Activated CD4-positive, alpha-beta T cell treated with anti-CD3 and anti-CD28 coated beads for 36 hours (primary cell): ENCODE measurements at regions of chr20 and their contacts with region 1.

Region 1: GRCh38 chr20:38748097-38748860 is at the start of gene ACTR5:
- DNase-seq: peak; percentile 98
- ATAC-seq: peak; percentile 92
- H3K4me3 Mint-ChIP-seq: peak within 1 kb of the TSS; percentile 91
- H3K27ac Mint-ChIP-seq: peak within 1 kb of the TSS; percentile 98
- H3K4me1 Mint-ChIP-seq: peaks cover 22% of the 10 kb centered on the region
- H3K27me3 Mint-ChIP-seq: no peaks in the 10 kb centered on the region
- total RNA-seq, gene ACTR5: 6.3 to 8.4 TPM

Region 2: DNA sequence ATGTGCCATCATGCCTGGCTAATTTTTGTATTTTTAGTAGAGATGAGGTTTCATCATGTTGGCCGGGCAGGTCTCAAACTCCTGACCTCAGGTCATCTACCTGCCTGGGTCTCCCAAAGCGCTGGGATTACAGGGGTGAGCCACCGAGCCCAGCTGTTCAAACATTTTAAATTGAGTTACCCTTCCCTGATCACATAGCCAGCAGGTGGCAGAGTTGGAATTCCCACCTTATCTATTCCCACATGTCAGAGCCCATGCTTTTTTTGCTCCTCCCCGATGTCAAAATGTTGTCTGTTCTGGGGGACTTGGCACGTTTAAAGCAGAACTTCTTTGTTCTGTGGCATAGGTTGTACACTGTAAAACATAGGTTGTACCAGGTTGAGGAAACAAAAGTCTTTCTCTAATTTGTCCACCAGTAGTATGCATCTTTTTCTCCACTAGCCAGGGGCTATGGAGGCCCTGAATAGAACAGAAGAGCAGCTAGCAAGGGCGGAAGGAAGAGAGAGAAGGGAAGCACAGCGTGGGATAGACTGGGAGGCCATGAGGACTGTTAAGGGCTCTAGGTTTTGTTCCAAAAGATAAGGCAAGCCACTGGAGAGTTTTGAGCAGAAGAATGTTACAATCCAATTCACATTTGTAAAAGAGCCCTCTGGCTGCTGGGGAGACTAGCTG is 409.3 kb before region 1 on chr20:
- CTCF ChIA-PET with region 1: no interaction called
- POLR2A ChIA-PET with region 1: no interaction called
- intact Hi-C with region 1: no loop called
- DNase-seq: no peak
- ATAC-seq: no peak
- H3K4me3 Mint-ChIP-seq: no peak overlapping the region
- H3K27ac Mint-ChIP-seq: no peak overlapping the region
- H3K4me1 Mint-ChIP-seq: no peaks in the 10 kb centered on the region
- H3K27me3 Mint-ChIP-seq: peaks cover 17% of the 10 kb centered on the region

Region 3: DNA sequence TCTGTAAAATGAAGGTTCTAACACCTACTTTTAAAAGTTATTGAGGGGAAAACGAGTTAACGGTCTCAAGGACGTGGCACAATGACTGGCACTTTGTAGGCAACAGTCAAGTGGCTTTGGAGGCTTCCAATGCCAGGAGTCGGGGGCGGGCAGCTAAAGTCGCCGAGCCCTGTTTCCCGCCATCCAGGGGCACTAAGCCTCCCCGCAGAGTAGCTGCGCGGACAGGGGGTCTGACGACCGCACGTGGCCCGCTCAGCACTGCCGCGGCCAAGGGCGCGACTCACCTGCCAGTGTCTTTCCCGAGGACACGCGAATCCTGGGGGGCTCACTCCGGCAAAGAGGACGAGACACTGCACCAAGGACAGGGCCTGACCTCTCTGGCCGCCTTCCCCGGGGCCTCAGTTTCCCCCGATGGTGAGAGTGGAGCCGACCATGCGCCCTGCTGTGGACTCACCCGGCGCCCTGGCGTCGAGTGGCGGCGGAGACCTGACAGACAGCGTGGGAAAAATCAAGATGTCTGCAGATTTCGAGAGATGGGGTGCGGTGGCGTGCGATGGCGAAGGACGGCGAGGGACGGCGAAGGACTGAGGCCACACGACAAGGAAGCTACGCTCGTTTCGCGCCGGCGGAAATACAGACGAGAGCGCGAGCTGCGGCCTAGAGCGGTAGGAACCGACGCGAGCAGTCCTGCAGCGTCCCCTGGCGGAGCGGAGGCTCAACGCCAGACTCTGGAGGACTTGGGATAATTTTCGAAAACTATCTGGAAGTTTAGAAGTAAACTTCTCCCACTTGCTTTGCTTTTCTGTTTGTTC is 313.3 kb before region 1 on chr20 and contains the start of gene SNHG17:
- CTCF ChIA-PET with region 1: no interaction called
- POLR2A ChIA-PET with region 1: no interaction called
- intact Hi-C with region 1: loop called in 1 of 2 experiments (anchors 1 kb)
- DNase-seq: peak; percentile 94
- ATAC-seq: peak; percentile 84
- H3K4me3 Mint-ChIP-seq: peak within 1 kb of the TSS; percentile 97
- H3K27ac Mint-ChIP-seq: peak within 1 kb of the TSS; percentile 98
- H3K4me1 Mint-ChIP-seq: peaks cover 39% of the 10 kb centered on the region
- H3K27me3 Mint-ChIP-seq: peaks cover 4% of the 10 kb centered on the region
- total RNA-seq, gene SNHG17: 70.7 to 72.4 TPM

Region 4: DNA sequence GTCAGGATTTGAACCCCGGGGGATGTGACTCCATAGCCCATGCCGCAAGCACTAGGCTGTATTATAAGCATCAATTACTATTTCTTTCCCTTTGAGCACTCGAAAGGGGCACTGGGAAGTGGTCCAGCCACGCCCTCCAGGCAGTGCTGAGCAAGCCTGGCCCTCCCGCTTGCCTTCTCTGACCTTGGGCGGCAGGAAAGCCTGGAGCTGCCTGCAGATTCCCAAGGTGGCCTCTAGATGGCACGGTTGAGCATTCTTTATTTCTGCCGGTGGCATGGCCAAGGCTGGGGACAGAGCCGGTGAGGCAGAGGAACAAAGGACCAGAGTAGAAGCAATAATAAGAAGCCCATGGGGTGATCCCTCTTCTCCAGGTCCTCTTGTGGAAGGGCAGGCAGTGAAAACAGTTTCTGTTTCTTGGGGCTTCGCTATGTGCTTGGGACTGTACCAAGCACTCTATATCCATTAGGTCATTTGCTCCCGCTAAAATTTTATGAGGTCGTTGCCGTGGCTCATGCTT is 114.6 kb before region 1 on chr20:
- CTCF ChIA-PET with region 1: interaction called, 12 read pairs
- POLR2A ChIA-PET with region 1: interaction called, 3 read pairs
- intact Hi-C with region 1: no loop called
- DNase-seq: peak; percentile 79
- ATAC-seq: peak; percentile 95
- H3K4me3 Mint-ChIP-seq: no peak overlapping the region
- H3K27ac Mint-ChIP-seq: no peak overlapping the region
- H3K4me1 Mint-ChIP-seq: no peaks in the 10 kb centered on the region
- H3K27me3 Mint-ChIP-seq: peaks cover 10% of the 10 kb centered on the region

Region 5: GRCh38 chr20:38730989-38731737 is 17.1 kb before region 1 on chr20:
- CTCF ChIA-PET with region 1: interaction called, 33 read pairs
- POLR2A ChIA-PET with region 1: no interaction called
- intact Hi-C with region 1: loop called (anchors 1 kb)
- DNase-seq: peak; percentile 90
- ATAC-seq: peak; percentile 81
- H3K4me3 Mint-ChIP-seq: peak overlapping the region; percentile 50
- H3K27ac Mint-ChIP-seq: no peak overlapping the region
- H3K4me1 Mint-ChIP-seq: peaks cover 39% of the 10 kb centered on the region
- H3K27me3 Mint-ChIP-seq: peaks cover 88% of the 10 kb centered on the region

Region 6: GRCh38 chr20:38805502-38805957 is 57.3 kb after region 1 on chr20 and contains the start of gene PPP1R16B:
- CTCF ChIA-PET with region 1: interaction called, 5 read pairs
- POLR2A ChIA-PET with region 1: no interaction called
- intact Hi-C with region 1: loop called (anchors 1 to 2 kb)
- DNase-seq: peak; percentile 86
- ATAC-seq: peak; percentile 79
- H3K4me3 Mint-ChIP-seq: peak within 1 kb of the TSS; percentile 86
- H3K27ac Mint-ChIP-seq: peak within 1 kb of the TSS; percentile 93
- H3K4me1 Mint-ChIP-seq: peaks cover 46% of the 10 kb centered on the region
- H3K27me3 Mint-ChIP-seq: no peaks in the 10 kb centered on the region
- total RNA-seq, gene PPP1R16B: 78.8 to 84.0 TPM

Region 7: DNA sequence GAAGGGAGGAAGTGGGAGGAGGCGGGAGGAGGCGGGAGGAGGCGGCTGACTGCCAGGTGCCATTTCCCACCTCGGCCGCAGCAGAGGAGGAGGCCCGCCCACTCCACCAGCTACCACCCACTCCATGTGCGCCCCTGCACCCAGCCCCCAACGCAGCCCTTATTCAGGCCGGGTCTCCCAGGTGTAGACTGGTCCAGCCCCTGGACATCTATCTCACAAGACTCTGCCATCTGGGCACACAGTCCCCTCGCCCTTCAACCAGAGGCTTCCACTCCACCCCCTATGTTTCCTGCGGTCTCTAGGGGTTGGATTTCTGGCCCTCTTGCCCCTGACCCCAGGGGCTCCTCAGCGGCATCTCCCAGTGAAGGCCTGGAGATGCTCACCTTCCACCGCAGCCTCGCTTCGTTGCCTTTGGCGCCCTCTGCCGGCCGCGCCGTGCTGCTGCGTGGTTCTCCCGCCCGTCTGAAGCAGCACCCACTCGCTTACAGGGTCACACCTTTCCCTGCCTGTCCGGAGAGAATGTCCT is 145.3 kb after region 1 on chr20:
- CTCF ChIA-PET with region 1: interaction called, 8 read pairs
- POLR2A ChIA-PET with region 1: no interaction called
- intact Hi-C with region 1: loop called in 1 of 2 experiments (anchors 5 kb)
- DNase-seq: peak; percentile 89
- ATAC-seq: peak; percentile 71
- H3K4me3 Mint-ChIP-seq: peak overlapping the region; percentile 37
- H3K27ac Mint-ChIP-seq: peak overlapping the region; percentile 88
- H3K4me1 Mint-ChIP-seq: peaks cover 54% of the 10 kb centered on the region
- H3K27me3 Mint-ChIP-seq: no peaks in the 10 kb centered on the region

Region 8: DNA sequence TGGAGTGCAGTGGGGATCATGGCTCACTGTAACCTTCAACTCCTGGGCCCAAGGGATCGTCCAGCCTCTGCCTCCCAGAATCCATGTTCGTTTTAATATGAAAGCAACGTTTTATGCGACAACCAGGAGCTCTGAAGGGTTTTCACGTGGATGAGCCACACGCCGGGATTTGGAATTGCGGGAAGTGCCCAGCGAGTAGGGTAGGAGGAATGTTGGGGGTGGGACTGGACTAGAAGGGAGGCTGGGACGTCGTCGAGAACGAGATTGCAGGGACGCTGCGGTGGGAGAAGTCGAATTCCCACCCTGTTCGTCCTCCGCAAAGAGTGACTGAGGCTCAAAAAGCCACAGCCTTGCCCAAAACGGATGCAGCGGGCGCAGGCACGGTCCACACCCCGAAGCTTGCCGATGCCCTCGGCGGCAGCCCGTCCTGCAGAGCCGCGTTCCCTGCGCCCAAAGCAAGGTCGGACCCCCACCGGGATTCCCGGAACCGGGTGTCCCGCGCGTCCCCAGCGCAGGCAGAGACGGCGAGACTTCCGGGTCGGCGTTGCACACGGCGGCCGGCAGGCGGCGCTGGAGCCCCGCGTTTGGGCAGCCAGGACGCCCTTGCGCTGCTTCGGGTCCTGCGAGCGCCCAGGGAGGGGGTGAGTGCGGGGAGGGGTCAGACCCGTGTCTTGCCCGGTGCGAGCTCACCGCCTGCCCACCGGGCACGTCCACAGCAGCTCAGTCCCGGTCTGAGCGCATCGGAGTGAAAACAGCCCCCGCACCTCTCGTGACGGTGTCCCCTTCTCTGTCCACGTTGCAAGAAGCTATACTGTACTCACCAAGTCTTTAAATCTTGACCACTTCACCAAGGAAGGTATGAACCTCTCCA is 301.6 kb after region 1 on chr20:
- CTCF ChIA-PET with region 1: interaction called, 4 read pairs
- POLR2A ChIA-PET with region 1: no interaction called
- intact Hi-C with region 1: loop called in 1 of 2 experiments (anchors 1 kb)
- DNase-seq: peak; percentile 86
- ATAC-seq: peak; percentile 83
- H3K4me3 Mint-ChIP-seq: peak overlapping the region; percentile 68
- H3K27ac Mint-ChIP-seq: peak overlapping the region; percentile 48
- H3K4me1 Mint-ChIP-seq: peaks cover 5% of the 10 kb centered on the region
- H3K27me3 Mint-ChIP-seq: peaks cover 3% of the 10 kb centered on the region